Vagina (tissue), 2 donors: ENCODE measurements at regions of chr5 and their contacts with region 1.

Region 1: GRCh38 chr5:142450419-142450818 is 125.6 kb upstream of the SPRY4 start:
- DNase-seq: no peak
- H3K4me3 ChIP-seq: no peak overlapping the region
- H3K27ac ChIP-seq: no peak overlapping the region
- H3K4me1 ChIP-seq: peaks cover 3% of the 10 kb centered on the region
- H3K27me3 ChIP-seq: no peaks in the 10 kb centered on the region
- CTCF ChIP-seq: no peak
- POLR2A ChIP-seq: no peak

Region 2: DNA sequence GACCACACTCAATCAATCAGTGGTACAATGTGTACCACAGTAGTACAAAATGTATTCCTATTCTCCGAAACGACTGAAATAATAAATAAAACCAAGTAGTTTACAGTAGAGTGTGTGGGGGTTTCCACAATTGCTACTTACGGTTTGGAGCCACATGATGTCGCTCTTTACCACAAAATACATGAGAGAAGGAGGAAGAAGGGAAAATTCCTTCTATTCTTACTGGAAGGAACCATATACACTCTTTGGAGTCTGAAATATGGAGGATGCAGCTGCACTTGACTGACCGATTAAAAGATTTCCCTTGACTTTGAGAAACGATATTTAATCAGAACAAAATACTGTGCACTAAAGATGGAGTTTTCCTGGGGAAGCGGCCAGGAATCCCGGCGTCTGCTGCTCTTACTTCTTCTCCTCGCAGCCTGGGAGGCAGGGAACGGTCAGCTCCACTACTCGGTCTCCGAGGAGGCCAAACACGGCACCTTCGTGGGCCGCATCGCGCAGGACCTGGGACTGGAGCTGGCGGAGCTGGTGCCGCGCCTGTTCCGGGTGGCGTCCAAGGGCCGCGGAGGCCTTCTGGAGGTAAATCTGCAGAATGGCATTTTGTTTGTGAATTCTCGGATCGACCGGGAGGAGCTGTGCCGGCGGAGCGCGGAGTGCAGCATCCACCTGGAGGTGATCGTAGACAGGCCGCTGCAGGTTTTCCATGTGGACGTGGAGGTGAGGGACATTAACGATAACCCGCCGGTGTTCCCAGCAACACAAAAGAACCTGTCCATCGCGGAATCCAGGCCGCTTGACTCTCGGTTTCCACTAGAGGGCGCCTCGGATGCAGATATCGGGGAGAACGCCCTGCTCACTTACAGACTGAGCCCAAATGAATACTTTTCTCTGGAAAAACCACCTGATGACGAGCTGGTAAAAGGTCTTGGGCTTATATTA is 1643.3 kb before region 1 on chr5 and contains the start of gene PCDHA4:
- intact Hi-C with region 1: no loop called
- DNase-seq: no peak
- H3K4me3 ChIP-seq: peak within 1 kb of the TSS; percentile 13 to 41
- H3K27ac ChIP-seq: no peak within 1 kb of the TSS
- H3K4me1 ChIP-seq: no peaks in the 10 kb centered on the region
- H3K27me3 ChIP-seq: no peaks in the 10 kb centered on the region
- CTCF ChIP-seq: no peak
- POLR2A ChIP-seq: no peak
- total RNA-seq, gene PCDHA4: 2.0 TPM

Region 3: DNA sequence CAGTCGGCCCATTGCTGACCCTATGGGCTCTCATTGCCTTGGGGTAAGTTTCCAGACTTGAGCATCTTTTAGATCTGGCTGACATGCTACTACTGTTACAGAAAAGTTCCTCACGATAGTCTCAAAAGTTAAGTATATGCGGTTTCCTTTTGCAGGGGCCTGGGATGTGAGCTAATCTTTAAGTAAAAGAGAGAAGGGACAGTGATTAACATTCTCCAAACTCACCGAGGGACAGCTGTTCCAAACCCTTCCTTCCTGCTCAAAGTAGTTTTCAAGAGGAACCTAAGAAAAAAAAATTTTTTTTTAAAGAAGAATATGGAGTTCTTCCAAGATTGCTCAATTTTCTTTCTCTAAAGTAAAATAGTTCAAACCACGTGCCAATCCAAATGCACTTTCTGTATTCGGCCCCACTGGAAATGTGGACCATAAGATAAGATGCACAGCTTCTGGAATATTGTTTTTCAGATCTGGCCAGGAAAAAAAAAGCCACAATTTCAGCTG is 42.4 kb after region 1 on chr5:
- intact Hi-C with region 1: loop called (anchors 2 kb)
- DNase-seq: no peak
- H3K4me3 ChIP-seq: no peak overlapping the region
- H3K27ac ChIP-seq: peak overlapping the region; percentile 27
- H3K4me1 ChIP-seq: peaks cover 14% of the 10 kb centered on the region
- H3K27me3 ChIP-seq: no peaks in the 10 kb centered on the region
- CTCF ChIP-seq: no peak
- POLR2A ChIP-seq: no peak